IMR-90 (cell line): ENCODE measurements at regions of chr1 and their contacts with region 1.

Region 1: GRCh38 chr1:234499119-234499942 is 20.4 kb upstream of the TARBP1 start:
- DNase-seq: peak; percentile 86
- ATAC-seq: peak; percentile 78
- H3K4me3 ChIP-seq: peak overlapping the region; percentile 10; the same call in 1 of the 2 replicates
- H3K27ac ChIP-seq: peak overlapping the region; percentile 89
- H3K4me1 ChIP-seq: peaks cover 25% of the 10 kb centered on the region
- H3K27me3 ChIP-seq: no peaks in the 10 kb centered on the region
- CTCF ChIP-seq: peak; percentile 96
- POLR2A ChIP-seq: peak; percentile 73
- RAD21 ChIP-seq: peak; percentile 99

Region 2: GRCh38 chr1:234212764-234213657 is 286.3 kb before region 1 on chr1:
- CTCF ChIA-PET with region 1: no interaction called
- POLR2A ChIA-PET with region 1: no interaction called
- dilution Hi-C with region 1: no loop called
- in situ Hi-C with region 1: no loop called
- intact Hi-C with region 1: no loop called
- DNase-seq: peak; percentile 26
- ATAC-seq: no peak
- H3K4me3 ChIP-seq: no peak overlapping the region
- H3K27ac ChIP-seq: no peak overlapping the region
- H3K4me1 ChIP-seq: no peaks in the 10 kb centered on the region
- H3K27me3 ChIP-seq: peaks cover 8% of the 10 kb centered on the region
- CTCF ChIP-seq: peak; percentile 29; the same call in 1 of the 2 replicates
- POLR2A ChIP-seq: no peak
- RAD21 ChIP-seq: no peak

Region 3: GRCh38 chr1:234599617-234600417 is 100.5 kb after region 1 on chr1:
- CTCF ChIA-PET with region 1: interaction called, 6 read pairs
- POLR2A ChIA-PET with region 1: interaction called, 4 read pairs
- dilution Hi-C with region 1: no loop called
- in situ Hi-C with region 1: loop called (anchors 5 kb)
- intact Hi-C with region 1: loop called (anchors 1 kb)
- DNase-seq: peak; percentile 82
- ATAC-seq: peak; percentile 89
- H3K4me3 ChIP-seq: peak overlapping the region; percentile 51
- H3K27ac ChIP-seq: peak overlapping the region; percentile 83
- H3K4me1 ChIP-seq: peaks cover 9% of the 10 kb centered on the region
- H3K27me3 ChIP-seq: no peaks in the 10 kb centered on the region
- CTCF ChIP-seq: no peak
- POLR2A ChIP-seq: peak; percentile 39
- RAD21 ChIP-seq: no peak

Region 4: GRCh38 chr1:234842726-234843641 is 343.7 kb after region 1 on chr1:
- CTCF ChIA-PET with region 1: no interaction called
- POLR2A ChIA-PET with region 1: no interaction called
- dilution Hi-C with region 1: no loop called
- in situ Hi-C with region 1: no loop called
- intact Hi-C with region 1: no loop called
- DNase-seq: peak; percentile 27
- ATAC-seq: no peak
- H3K4me3 ChIP-seq: no peak overlapping the region
- H3K27ac ChIP-seq: no peak overlapping the region
- H3K4me1 ChIP-seq: peaks cover 7% of the 10 kb centered on the region
- H3K27me3 ChIP-seq: no peaks in the 10 kb centered on the region
- CTCF ChIP-seq: no peak
- POLR2A ChIP-seq: no peak
- RAD21 ChIP-seq: no peak

Region 5: GRCh38 chr1:234934611-234935033 is 435.3 kb after region 1 on chr1:
- CTCF ChIA-PET with region 1: no interaction called
- POLR2A ChIA-PET with region 1: no interaction called
- dilution Hi-C with region 1: no loop called
- in situ Hi-C with region 1: no loop called
- intact Hi-C with region 1: loop called (anchors 2 kb)
- DNase-seq: peak; percentile 99
- ATAC-seq: peak; percentile 92
- H3K4me3 ChIP-seq: no peak overlapping the region
- H3K27ac ChIP-seq: peak overlapping the region; percentile 78
- H3K4me1 ChIP-seq: peaks cover 11% of the 10 kb centered on the region
- H3K27me3 ChIP-seq: no peaks in the 10 kb centered on the region
- CTCF ChIP-seq: no peak
- POLR2A ChIP-seq: peak; percentile 45; the same call in 1 of the 2 replicates
- RAD21 ChIP-seq: peak; percentile 28

Region 6: GRCh38 chr1:234978397-234979295 is 479.3 kb after region 1 on chr1:
- CTCF ChIA-PET with region 1: no interaction called
- POLR2A ChIA-PET with region 1: no interaction called
- dilution Hi-C with region 1: no loop called
- in situ Hi-C with region 1: loop called (anchors 5 kb)
- intact Hi-C with region 1: no loop called
- DNase-seq: peak; percentile 93
- ATAC-seq: peak; percentile 24
- H3K4me3 ChIP-seq: no peak overlapping the region
- H3K27ac ChIP-seq: peak overlapping the region; percentile 96
- H3K4me1 ChIP-seq: peaks cover 53% of the 10 kb centered on the region
- H3K27me3 ChIP-seq: no peaks in the 10 kb centered on the region
- CTCF ChIP-seq: peak; percentile 19; the same call in 1 of the 2 replicates
- POLR2A ChIP-seq: peak; percentile 54
- RAD21 ChIP-seq: peak; percentile 40